ENCODE measurements at regions of chr16 and their contacts with region 1.

Region 1: DNA sequence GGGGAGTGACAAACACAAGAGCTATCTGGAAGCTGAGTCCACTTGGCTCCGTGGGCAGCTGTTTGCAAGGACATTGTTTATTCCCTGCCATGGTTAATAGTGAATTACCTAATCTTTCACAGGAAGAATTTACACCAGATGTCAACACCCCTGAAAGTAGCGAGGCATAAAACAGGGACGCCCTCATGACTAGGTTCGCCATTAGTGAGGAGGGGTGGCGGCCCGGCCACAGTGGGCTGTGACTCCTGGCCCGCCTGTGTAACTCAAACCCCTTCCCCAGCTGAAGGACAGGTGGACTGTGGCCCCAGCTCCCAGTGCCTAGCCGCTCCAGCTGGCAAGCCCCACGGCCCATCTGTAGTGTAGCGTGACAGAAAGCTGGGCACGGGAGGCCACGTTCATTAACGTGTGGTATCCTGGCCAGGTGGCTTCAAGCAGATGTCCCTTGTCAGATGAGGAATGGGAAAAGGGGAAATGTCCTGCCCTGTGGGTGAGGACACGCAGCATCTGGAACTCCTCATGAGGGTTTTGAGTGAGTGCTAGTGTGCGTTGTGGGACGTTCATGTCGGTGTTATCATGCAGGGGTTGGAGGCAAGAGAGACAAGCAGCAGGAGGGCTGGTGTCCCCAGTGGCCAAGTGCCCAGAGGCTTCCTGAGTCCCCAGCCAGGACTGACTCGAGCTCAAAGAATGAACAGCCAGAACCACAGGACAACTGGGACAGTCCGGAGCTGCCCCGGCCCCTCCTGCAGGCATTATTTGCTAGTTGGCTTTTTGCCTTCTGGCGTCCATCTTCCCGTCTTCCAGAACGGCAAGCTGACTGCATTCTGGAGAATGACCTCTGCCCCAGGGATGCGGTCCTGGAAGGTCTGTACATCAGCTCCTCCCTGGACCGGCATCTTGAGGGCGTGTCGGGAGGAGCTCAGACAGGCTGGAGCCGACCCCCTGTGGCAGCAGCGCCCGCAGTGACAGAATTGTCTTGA is 19.2 kb downstream of the KDM8 start:
- DNase-seq: peak in 4 of 7 donors; percentile 41 to 73 (median 51)
- H3K4me3 ChIP-seq: no peak overlapping the region
- H3K27ac ChIP-seq: peak overlapping the region in 2 of 5 donors; percentile 6 to 71
- H3K4me1 ChIP-seq: no peaks in the 10 kb centered on the region
- H3K27me3 ChIP-seq: no peaks in the 10 kb centered on the region
- CTCF ChIP-seq: no peak
- POLR2A ChIP-seq: no peak

Region 2: DNA sequence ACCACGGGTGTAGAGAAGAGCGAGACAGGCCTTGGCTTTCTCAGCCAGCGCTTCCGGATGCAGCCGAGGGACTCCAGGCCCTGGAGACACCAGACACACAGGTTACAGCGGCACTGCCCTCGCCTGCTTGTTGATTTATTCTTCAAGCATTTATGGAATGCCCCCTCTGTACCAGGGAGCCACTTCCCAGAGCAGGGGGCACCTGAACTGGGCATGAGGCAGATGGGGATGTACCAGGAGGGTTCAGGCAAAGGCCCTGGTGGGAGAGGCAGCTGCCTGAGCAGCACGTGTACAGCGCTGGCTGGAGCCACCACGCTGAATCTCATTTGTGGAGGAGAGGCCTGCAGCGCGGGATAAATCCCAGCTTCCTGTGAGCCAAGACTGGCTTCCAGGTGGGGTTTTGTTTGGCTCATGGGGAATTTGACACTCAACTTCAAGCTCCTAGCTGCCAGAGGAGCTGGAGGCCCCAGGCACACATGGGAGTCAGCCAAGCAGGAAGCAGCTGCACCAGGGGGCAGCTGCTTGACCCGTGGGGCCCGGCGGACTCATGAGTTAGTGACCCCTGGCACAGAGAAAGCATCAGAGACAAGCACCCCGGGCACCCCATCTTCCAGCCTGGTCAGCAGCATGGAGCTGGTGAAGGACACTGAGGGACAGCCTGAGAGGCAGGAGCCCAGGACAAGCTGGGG is 239.1 kb after region 1 on chr16:
- intact Hi-C with region 1: loop called in 1 of 2 experiments (anchors 10 kb)
- DNase-seq: no peak
- H3K4me3 ChIP-seq: no peak overlapping the region
- H3K27ac ChIP-seq: peak overlapping the region in 2 of 5 donors; percentile 57 to 69
- H3K4me1 ChIP-seq: peaks cover 8 to 18% of the 10 kb centered on the region in 2 donors
- H3K27me3 ChIP-seq: no peaks in the 10 kb centered on the region
- CTCF ChIP-seq: no peak
- POLR2A ChIP-seq: no peak